Sigmoid colon (tissue), 7 donors: ENCODE measurements at regions of chr20 and their contacts with region 1.

Region 1: GRCh38 chr20:19692685-19693119 is 65.4 kb upstream of the RIN2 start:
- DNase-seq: peak; percentile 70
- H3K4me3 ChIP-seq: no peak overlapping the region
- H3K27ac ChIP-seq: no peak overlapping the region
- H3K4me1 ChIP-seq: peaks cover 0 to 6% (median 0%) of the 10 kb centered on the region in 4 donors
- H3K27me3 ChIP-seq: no peaks in the 10 kb centered on the region
- CTCF ChIP-seq: peak; percentile 77 to 91 (median 89)
- EP300 ChIP-seq: no peak
- POLR2A ChIP-seq: no peak

Region 2: GRCh38 chr20:19633985-19634384 is 58.7 kb before region 1 on chr20:
- intact Hi-C with region 1: no loop called
- DNase-seq: no peak
- H3K4me3 ChIP-seq: no peak overlapping the region
- H3K27ac ChIP-seq: no peak overlapping the region
- H3K4me1 ChIP-seq: no peaks in the 10 kb centered on the region
- H3K27me3 ChIP-seq: no peaks in the 10 kb centered on the region
- CTCF ChIP-seq: no peak
- EP300 ChIP-seq: no peak
- POLR2A ChIP-seq: no peak

Region 3: DNA sequence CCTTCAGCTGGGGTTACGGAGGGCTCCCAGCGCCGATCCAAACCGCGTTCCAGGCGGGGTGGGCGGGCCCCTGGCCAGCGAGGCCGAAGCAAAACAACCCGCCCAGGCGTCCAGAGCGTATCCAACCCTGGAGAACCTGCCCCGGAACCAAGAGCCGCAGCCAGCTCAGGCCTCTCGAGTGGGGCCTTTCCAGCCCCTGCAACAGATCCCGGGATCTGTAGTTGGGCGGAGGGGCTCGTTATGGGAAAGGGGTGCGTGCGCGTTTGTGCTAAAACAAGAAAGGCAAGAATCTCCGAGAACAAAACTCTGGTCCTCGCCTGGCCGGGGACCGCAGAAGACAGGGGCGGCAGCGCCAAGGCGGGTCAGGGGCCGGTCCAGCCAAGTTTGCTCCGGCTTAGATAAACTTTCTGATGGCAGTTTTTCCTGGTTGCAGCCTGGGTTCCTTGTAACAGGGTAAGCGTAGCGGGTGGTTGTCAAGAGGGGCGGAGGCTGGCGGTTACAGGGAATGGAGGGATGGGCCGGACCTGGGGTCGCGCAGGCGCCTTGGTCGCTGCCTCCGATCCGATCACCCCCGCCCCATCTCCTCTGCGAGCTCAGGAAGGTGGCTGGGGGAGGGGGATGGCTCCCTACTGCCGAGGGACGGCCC is 64.9 kb after region 1 on chr20:
- intact Hi-C with region 1: loop called (anchors 2 kb)
- DNase-seq: peak; percentile 96
- H3K4me3 ChIP-seq: peak overlapping the region; percentile 71 to 94 (median 84)
- H3K27ac ChIP-seq: peak overlapping the region; percentile 92 to 96 (median 94)
- H3K4me1 ChIP-seq: peaks cover 0 to 33% (median 29%) of the 10 kb centered on the region in 4 donors
- H3K27me3 ChIP-seq: no peaks in the 10 kb centered on the region
- CTCF ChIP-seq: no peak
- EP300 ChIP-seq: no peak
- POLR2A ChIP-seq: peak; percentile 31 to 36

Region 4: GRCh38 chr20:19889011-19889953 is 196.6 kb after region 1 on chr20:
- intact Hi-C with region 1: loop called (anchors 5 kb)
- DNase-seq: peak; percentile 77
- H3K4me3 ChIP-seq: peak overlapping the region in 3 of 4 donors; percentile 33 to 43 (median 35)
- H3K27ac ChIP-seq: peak overlapping the region; percentile 80 to 87 (median 85)
- H3K4me1 ChIP-seq: peaks cover 0 to 64% (median 53%) of the 10 kb centered on the region in 4 donors
- H3K27me3 ChIP-seq: no peaks in the 10 kb centered on the region
- CTCF ChIP-seq: no peak
- EP300 ChIP-seq: no peak
- POLR2A ChIP-seq: no peak